B cell (primary cell): ENCODE measurements at regions of chr4 and their contacts with region 1.

Region 1: DNA sequence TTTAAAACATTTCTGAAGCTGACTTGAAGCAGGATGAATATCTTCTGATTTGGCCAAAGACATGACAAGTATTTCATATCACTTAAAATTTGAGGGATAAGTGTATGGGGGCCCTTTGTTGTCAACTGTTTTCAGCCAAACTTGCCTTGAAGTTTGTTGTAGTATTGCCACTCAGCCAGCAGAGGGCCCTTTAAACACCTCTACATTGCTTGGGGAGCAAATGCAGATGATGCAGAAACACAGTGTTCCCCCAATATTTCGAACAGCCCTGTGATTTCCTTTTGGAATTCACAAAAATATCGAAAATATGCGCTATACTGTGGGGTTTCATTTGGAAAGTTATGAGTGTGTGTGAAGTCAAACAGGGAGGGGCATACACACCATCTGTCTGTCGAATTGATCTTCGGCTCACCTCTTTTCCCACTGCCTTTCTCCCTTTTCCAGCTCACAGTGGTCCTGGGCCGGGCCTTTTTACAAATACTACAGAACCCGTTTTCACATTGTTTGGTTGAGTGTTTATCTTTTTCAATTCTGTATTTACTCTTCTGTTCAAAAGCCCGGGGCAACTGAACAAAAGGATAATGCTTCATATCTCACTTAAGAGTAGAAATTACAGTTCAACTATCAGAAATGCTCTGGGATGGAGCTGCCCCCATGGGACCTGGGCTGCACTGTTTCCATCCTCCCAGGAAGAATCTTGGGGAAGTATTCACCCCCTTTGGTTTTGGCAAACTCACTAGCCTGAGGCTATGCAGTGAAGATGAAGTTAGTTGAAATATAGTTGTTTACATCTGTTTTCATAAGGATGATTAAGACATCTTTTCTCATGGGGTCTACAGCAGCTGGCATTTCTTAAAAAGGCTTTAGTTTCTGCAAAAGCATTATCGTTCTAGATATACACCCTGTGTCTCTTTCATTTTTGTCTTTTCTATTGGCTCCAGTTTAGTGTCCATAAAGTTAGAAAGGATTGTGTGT is 137.6 kb downstream of the EGF start:
- DNase-seq: peak; percentile 56
- ATAC-seq: no peak
- H3K4me3 ChIP-seq: no peak overlapping the region
- H3K4me3 Mint-ChIP-seq: no peak overlapping the region
- H3K27ac ChIP-seq: no peak overlapping the region
- H3K27ac Mint-ChIP-seq: no peak overlapping the region
- H3K4me1 ChIP-seq: no peaks in the 10 kb centered on the region
- H3K4me1 Mint-ChIP-seq: no peaks in the 10 kb centered on the region
- H3K27me3 ChIP-seq: no peaks in the 10 kb centered on the region
- H3K27me3 Mint-ChIP-seq: no peaks in the 10 kb centered on the region
- CTCF ChIP-seq: peak; percentile 85

Region 2: DNA sequence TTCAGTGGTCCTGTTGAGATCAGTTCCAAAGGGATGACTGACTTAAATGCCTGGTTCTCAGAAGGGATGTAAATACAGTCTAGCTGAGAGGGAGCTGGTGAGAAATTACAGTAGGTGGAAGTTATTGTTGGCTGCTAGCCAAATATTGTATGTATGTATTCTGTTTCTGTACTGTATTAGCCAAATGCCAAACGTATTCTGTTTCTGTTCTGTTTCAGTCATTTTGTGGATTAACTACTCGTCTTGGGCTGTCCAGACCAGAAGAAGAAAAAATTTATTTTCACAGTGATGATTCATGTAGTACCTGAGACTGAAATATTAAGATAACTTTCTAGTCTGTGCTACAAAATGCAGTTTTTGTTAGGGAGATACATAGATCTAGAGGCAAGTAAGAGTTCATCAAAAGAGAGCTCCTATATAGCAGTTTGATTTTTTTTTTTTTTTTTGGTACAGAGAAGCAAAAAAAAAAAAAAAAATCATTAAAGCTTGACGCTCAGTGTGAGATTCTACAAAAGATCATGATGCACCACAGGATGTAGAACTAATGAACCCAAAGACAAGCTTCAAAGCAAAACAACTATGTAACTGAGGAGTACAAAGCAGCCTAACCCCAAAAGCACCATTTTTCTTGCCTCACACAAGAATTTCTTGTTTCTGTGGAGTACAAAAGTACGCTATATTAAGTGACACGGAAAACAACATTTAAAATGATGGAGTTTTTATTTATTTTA is 401.8 kb before region 1 on chr4:
- CTCF ChIA-PET with region 1: no interaction called
- POLR2A ChIA-PET with region 1: no interaction called
- intact Hi-C with region 1: no loop called
- DNase-seq: peak; percentile 7
- ATAC-seq: peak; percentile 17
- H3K4me3 ChIP-seq: no peak overlapping the region
- H3K4me3 Mint-ChIP-seq: peak overlapping the region; percentile 35
- H3K27ac ChIP-seq: peak overlapping the region in 1 of 2 donors; percentile 1
- H3K27ac Mint-ChIP-seq: peak overlapping the region; percentile 64
- H3K4me1 ChIP-seq: peaks cover 12 to 18% of the 10 kb centered on the region in 2 donors
- H3K4me1 Mint-ChIP-seq: peaks cover 32% of the 10 kb centered on the region
- H3K27me3 ChIP-seq: no peaks in the 10 kb centered on the region
- H3K27me3 Mint-ChIP-seq: no peaks in the 10 kb centered on the region
- CTCF ChIP-seq: no peak

Region 3: DNA sequence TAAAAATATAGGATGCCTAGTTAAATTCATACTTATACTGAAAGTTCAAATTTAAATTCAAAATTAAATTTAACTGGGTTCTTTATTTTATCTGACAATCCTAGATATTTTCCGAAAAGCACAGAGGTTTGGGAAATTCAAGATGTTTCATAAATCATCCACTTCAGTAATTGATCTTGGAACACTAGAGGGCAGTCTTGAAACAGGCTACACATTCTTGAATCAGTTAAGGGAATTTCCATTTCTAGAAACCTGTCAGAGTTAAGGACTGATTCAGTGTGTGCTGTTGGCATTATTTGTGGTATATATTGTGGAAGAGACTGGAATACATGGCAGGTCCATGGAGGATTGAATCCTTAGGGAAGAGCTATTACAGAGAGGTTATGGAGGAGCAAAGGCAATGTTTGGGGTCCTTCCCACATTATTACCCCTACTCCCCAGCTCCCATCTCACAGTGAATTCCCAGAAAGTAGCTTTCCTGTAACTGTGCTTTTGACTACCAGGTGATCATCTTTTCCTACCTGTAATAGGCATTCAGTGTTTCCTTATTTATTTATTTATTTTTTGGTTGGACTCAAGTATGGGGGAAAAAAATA is 44.7 kb before region 1 on chr4:
- CTCF ChIA-PET with region 1: interaction called, 10 read pairs
- POLR2A ChIA-PET with region 1: no interaction called
- intact Hi-C with region 1: no loop called
- DNase-seq: peak; percentile 63
- ATAC-seq: no peak
- H3K4me3 ChIP-seq: no peak overlapping the region
- H3K4me3 Mint-ChIP-seq: no peak overlapping the region
- H3K27ac ChIP-seq: no peak overlapping the region
- H3K27ac Mint-ChIP-seq: no peak overlapping the region
- H3K4me1 ChIP-seq: no peaks in the 10 kb centered on the region
- H3K4me1 Mint-ChIP-seq: no peaks in the 10 kb centered on the region
- H3K27me3 ChIP-seq: no peaks in the 10 kb centered on the region
- H3K27me3 Mint-ChIP-seq: peaks cover 9% of the 10 kb centered on the region
- CTCF ChIP-seq: peak; percentile 86

Region 4: DNA sequence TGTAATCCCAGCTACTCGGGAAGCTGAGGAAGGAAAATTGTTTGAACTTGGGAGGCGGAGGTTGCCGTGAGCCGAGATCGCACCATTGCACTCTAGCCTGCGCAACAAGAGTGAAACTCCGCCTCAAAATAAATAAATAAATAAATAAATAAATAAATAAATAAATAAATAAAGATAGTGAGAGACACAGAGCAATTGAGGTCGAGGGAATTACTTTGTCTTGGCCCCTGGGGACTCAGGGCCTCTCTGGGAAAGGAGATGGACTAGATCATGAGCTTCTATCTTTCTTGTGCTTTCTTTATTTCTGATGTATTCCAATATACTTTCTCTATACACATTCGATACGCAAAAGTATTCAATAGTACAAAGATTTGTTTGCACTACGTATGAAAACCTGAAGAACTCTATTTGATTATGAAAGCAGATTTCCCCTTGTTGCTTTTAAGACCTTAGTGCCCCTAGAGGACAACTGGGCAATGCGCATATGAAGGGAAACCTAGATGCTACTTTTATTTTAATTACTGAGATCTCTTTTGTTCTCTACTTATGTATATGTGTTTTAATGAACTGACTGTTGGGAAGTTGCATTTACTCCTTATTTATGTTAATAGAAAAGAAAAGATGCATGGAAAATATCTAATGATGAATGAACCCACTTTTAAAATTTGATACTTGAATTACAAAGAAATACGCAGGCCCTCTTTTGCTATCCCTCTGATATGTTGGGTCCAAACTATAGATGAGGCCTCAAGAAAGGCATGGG is 160.9 kb after region 1 on chr4:
- CTCF ChIA-PET with region 1: interaction called, 70 read pairs
- POLR2A ChIA-PET with region 1: no interaction called
- intact Hi-C with region 1: no loop called
- DNase-seq: peak; percentile 50
- ATAC-seq: no peak
- H3K4me3 ChIP-seq: no peak overlapping the region
- H3K4me3 Mint-ChIP-seq: no peak overlapping the region
- H3K27ac ChIP-seq: no peak overlapping the region
- H3K27ac Mint-ChIP-seq: no peak overlapping the region
- H3K4me1 ChIP-seq: no peaks in the 10 kb centered on the region
- H3K4me1 Mint-ChIP-seq: peaks cover 2% of the 10 kb centered on the region
- H3K27me3 ChIP-seq: no peaks in the 10 kb centered on the region
- H3K27me3 Mint-ChIP-seq: peaks cover 11% of the 10 kb centered on the region
- CTCF ChIP-seq: peak; percentile 83

Region 5: GRCh38 chr4:110510955-110511544 is 460.8 kb after region 1 on chr4:
- CTCF ChIA-PET with region 1: interaction called, 27 read pairs
- POLR2A ChIA-PET with region 1: no interaction called
- intact Hi-C with region 1: loop called (anchors 1 kb)
- DNase-seq: peak; percentile 60
- ATAC-seq: peak; percentile 43
- H3K4me3 ChIP-seq: no peak overlapping the region
- H3K4me3 Mint-ChIP-seq: no peak overlapping the region
- H3K27ac ChIP-seq: no peak overlapping the region
- H3K27ac Mint-ChIP-seq: no peak overlapping the region
- H3K4me1 ChIP-seq: peaks cover 4 to 5% of the 10 kb centered on the region in 2 donors
- H3K4me1 Mint-ChIP-seq: peaks cover 5% of the 10 kb centered on the region
- H3K27me3 ChIP-seq: no peaks in the 10 kb centered on the region
- H3K27me3 Mint-ChIP-seq: peaks cover 6% of the 10 kb centered on the region
- CTCF ChIP-seq: peak; percentile 94

Region 6: DNA sequence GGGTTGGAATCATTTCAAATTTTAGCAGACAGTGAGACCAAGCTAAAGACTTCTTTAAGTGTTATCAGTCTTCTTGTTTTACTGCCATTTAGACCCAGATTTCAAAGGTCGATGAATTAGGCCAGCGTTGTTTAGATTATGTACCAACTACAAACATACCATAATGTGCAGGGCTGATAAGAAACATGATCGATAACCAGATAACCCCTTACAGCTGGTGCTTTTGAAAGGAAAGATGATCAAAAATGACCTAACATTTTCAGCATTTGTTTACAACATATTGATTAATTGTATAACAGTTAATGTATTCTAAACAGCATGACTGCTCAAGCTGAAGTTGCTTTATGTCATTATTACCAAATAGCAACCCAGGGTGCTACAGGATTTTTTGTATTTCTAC is 1694.6 kb after region 1 on chr4:
- CTCF ChIA-PET with region 1: no interaction called
- POLR2A ChIA-PET with region 1: no interaction called
- intact Hi-C with region 1: loop called (anchors 5 kb)
- DNase-seq: no peak
- ATAC-seq: no peak
- H3K4me3 ChIP-seq: no peak overlapping the region
- H3K4me3 Mint-ChIP-seq: no peak overlapping the region
- H3K27ac ChIP-seq: no peak overlapping the region
- H3K27ac Mint-ChIP-seq: no peak overlapping the region
- H3K4me1 ChIP-seq: no peaks in the 10 kb centered on the region
- H3K4me1 Mint-ChIP-seq: no peaks in the 10 kb centered on the region
- H3K27me3 ChIP-seq: no peaks in the 10 kb centered on the region
- H3K27me3 Mint-ChIP-seq: no peaks in the 10 kb centered on the region
- CTCF ChIP-seq: no peak